Activated naive CD4-positive, alpha-beta T cell treated with anti-CD3 and anti-CD28 coated beads for 36 hours (primary cell): ENCODE measurements at regions of chr2 and their contacts with region 1.

Region 1: GRCh38 chr2:189287982-189288521 is 108.5 kb upstream of the COL5A2 start:
- DNase-seq: no peak
- H3K4me3 Mint-ChIP-seq: no peak overlapping the region
- H3K27ac Mint-ChIP-seq: peak overlapping the region; percentile 80
- H3K4me1 Mint-ChIP-seq: peaks cover 66% of the 10 kb centered on the region
- H3K27me3 Mint-ChIP-seq: no peaks in the 10 kb centered on the region

Region 2: GRCh38 chr2:188524519-188525113 is 763.4 kb before region 1 on chr2:
- CTCF ChIA-PET with region 1: interaction called, 3 read pairs
- intact Hi-C with region 1: loop called (anchors 1 kb)
- DNase-seq: peak; percentile 35
- H3K4me3 Mint-ChIP-seq: no peak overlapping the region
- H3K27ac Mint-ChIP-seq: no peak overlapping the region
- H3K4me1 Mint-ChIP-seq: no peaks in the 10 kb centered on the region
- H3K27me3 Mint-ChIP-seq: peaks cover 2% of the 10 kb centered on the region

Region 3: GRCh38 chr2:189115126-189115525 is 172.9 kb before region 1 on chr2:
- CTCF ChIA-PET with region 1: no interaction called
- intact Hi-C with region 1: loop called (anchors 1 kb)
- DNase-seq: no peak
- H3K4me3 Mint-ChIP-seq: no peak overlapping the region
- H3K27ac Mint-ChIP-seq: no peak overlapping the region
- H3K4me1 Mint-ChIP-seq: peaks cover 22% of the 10 kb centered on the region
- H3K27me3 Mint-ChIP-seq: no peaks in the 10 kb centered on the region

Region 4: GRCh38 chr2:189261431-189261841 is 26.6 kb before region 1 on chr2:
- CTCF ChIA-PET with region 1: no interaction called
- intact Hi-C with region 1: loop called (anchors 2 kb)
- DNase-seq: no peak
- H3K4me3 Mint-ChIP-seq: no peak overlapping the region
- H3K27ac Mint-ChIP-seq: no peak overlapping the region
- H3K4me1 Mint-ChIP-seq: peaks cover 38% of the 10 kb centered on the region
- H3K27me3 Mint-ChIP-seq: no peaks in the 10 kb centered on the region

Region 5: GRCh38 chr2:189412330-189412953 is 124.4 kb after region 1 on chr2:
- CTCF ChIA-PET with region 1: interaction called, 17 read pairs
- intact Hi-C with region 1: loop called (anchors 1 kb)
- DNase-seq: peak; percentile 71
- H3K4me3 Mint-ChIP-seq: no peak overlapping the region
- H3K27ac Mint-ChIP-seq: no peak overlapping the region
- H3K4me1 Mint-ChIP-seq: peaks cover 24% of the 10 kb centered on the region
- H3K27me3 Mint-ChIP-seq: no peaks in the 10 kb centered on the region

Region 6: GRCh38 chr2:189466660-189467059 is 178.6 kb after region 1 on chr2:
- CTCF ChIA-PET with region 1: no interaction called
- intact Hi-C with region 1: no loop called
- DNase-seq: no peak
- H3K4me3 Mint-ChIP-seq: no peak overlapping the region
- H3K27ac Mint-ChIP-seq: no peak overlapping the region
- H3K4me1 Mint-ChIP-seq: no peaks in the 10 kb centered on the region
- H3K27me3 Mint-ChIP-seq: no peaks in the 10 kb centered on the region